ENCODE measurements at regions of chr7 and their contacts with region 1.

Region 1: GRCh38 chr7:92717993-92718716 is 118.2 kb downstream of the CDK6 start:
- DNase-seq: peak; percentile 45
- H3K4me3 ChIP-seq: peak overlapping the region; percentile 32
- H3K27ac ChIP-seq: no peak overlapping the region
- H3K4me1 ChIP-seq: peaks cover 24% of the 10 kb centered on the region
- CTCF ChIP-seq: no peak

Region 2: GRCh38 chr7:92705811-92706210 is 12.3 kb before region 1 on chr7:
- CTCF ChIA-PET with region 1: no interaction called
- POLR2A ChIA-PET with region 1: interaction called, 15 read pairs
- intact Hi-C with region 1: loop called (anchors 1 kb)
- DNase-seq: no peak
- H3K4me3 ChIP-seq: no peak overlapping the region
- H3K27ac ChIP-seq: no peak overlapping the region
- H3K4me1 ChIP-seq: no peaks in the 10 kb centered on the region
- CTCF ChIP-seq: no peak

Region 3: DNA sequence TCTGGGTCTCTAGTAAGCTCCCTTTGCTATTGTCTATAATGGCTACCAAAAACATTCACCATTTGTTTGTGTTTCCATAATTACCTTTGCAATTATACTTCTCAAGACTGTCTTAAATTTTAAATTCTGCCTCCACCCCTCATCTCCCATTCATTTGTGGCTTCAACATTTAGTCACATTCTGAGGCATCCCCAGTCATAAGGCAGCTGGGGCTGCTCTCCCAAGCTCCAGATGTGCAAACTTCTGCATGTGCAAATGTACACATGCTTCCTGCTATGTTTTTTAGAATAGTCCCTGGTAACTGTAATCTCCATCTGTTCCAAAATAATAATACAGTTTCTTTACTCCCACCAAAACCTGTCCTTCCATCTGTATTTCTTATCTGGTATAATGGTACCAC is 20.9 kb after region 1 on chr7:
- CTCF ChIA-PET with region 1: no interaction called
- POLR2A ChIA-PET with region 1: interaction called, 10 read pairs
- intact Hi-C with region 1: no loop called
- DNase-seq: no peak
- H3K4me3 ChIP-seq: no peak overlapping the region
- H3K27ac ChIP-seq: no peak overlapping the region
- H3K4me1 ChIP-seq: no peaks in the 10 kb centered on the region
- CTCF ChIP-seq: no peak

Region 4: GRCh38 chr7:92768501-92769393 is 50.6 kb after region 1 on chr7:
- CTCF ChIA-PET with region 1: no interaction called
- POLR2A ChIA-PET with region 1: interaction called, 3 read pairs
- intact Hi-C with region 1: loop called (anchors 5 kb)
- DNase-seq: peak; percentile 4
- H3K4me3 ChIP-seq: no peak overlapping the region
- H3K27ac ChIP-seq: no peak overlapping the region
- H3K4me1 ChIP-seq: peaks cover 18% of the 10 kb centered on the region
- CTCF ChIP-seq: no peak

Measured in OCI-LY7 (cell line).